ENCODE measurements at regions of chr14 and their contacts with region 1.

Region 1: DNA sequence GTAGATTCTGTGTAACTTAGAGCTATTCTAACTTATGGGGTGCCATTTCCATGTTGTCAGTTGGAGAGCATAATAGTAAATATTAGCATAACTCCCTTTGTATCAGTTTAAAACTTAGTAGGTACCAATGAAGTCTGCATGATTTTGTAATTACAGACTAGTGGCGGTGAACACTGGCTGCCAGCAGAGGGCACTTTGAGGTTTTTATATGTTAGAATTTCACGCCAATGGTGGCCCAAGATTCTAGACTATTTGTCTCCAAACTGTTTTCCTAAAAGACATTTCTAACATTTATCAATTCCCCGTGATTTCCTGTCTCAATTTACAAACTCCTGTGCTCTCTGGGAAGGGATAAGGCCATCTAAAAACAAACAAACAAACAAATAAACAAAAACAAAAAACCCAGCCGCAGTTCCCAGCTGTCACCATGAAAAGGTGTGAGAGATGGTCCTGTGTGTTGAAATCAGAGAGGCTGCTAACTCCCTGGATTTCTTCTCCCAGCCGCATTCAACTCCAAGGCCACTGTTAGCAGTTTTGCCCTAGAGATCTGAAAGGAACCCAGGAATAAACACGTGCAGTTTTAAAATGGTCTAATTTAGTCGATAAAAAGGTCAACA is 57.6 kb downstream of the BRMS1L start:
- DNase-seq: no peak
- ATAC-seq: peak; percentile 50; the same call in 1 of the 2 replicates
- H3K4me3 Mint-ChIP-seq: no peak overlapping the region
- H3K27ac Mint-ChIP-seq: no peak overlapping the region
- H3K4me1 Mint-ChIP-seq: peaks cover 4% of the 10 kb centered on the region; the same call in 1 of the 2 replicates
- H3K27me3 Mint-ChIP-seq: no peaks in the 10 kb centered on the region; the same call in 1 of the 2 replicates
- CTCF ChIP-seq: peak; percentile 37

Region 2: DNA sequence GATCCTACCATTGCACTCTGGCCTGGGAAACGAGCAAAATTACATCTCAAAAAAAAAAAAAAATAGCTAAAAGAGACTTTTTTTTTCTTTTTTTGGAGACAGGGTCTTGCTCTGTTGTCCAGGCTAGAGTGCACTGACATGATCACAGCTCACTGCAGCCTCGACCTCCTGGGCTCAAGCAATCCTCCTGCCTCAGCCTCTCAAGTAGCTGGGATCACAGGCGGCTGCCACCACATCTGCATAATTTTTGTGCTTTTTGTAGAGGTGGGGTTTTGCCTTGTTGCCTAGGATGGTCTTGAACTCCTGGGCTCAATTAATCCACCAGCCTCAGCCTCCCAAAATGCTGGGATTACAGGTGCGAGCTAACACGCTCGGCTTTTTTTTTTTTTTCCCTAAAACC is 86.0 kb before region 1 on chr14:
- CTCF ChIA-PET with region 1: no interaction called
- POLR2A ChIA-PET with region 1: no interaction called
- DNase-seq: no peak
- ATAC-seq: no peak
- H3K4me3 Mint-ChIP-seq: no peak overlapping the region
- H3K27ac Mint-ChIP-seq: no peak overlapping the region
- H3K4me1 Mint-ChIP-seq: no peaks in the 10 kb centered on the region
- H3K27me3 Mint-ChIP-seq: no peaks in the 10 kb centered on the region
- CTCF ChIP-seq: no peak

Region 3: GRCh38 chr14:35944847-35945246 is 61.1 kb after region 1 on chr14:
- CTCF ChIA-PET with region 1: interaction called, 19 read pairs
- POLR2A ChIA-PET with region 1: no interaction called
- DNase-seq: peak; percentile 65
- ATAC-seq: peak; percentile 99
- H3K4me3 Mint-ChIP-seq: no peak overlapping the region
- H3K27ac Mint-ChIP-seq: no peak overlapping the region
- H3K4me1 Mint-ChIP-seq: peaks cover under 1% of the 10 kb centered on the region; the same call in 1 of the 2 replicates
- H3K27me3 Mint-ChIP-seq: peaks cover 15% of the 10 kb centered on the region
- CTCF ChIP-seq: no peak; the same call in 1 of the 2 replicates

Region 4: DNA sequence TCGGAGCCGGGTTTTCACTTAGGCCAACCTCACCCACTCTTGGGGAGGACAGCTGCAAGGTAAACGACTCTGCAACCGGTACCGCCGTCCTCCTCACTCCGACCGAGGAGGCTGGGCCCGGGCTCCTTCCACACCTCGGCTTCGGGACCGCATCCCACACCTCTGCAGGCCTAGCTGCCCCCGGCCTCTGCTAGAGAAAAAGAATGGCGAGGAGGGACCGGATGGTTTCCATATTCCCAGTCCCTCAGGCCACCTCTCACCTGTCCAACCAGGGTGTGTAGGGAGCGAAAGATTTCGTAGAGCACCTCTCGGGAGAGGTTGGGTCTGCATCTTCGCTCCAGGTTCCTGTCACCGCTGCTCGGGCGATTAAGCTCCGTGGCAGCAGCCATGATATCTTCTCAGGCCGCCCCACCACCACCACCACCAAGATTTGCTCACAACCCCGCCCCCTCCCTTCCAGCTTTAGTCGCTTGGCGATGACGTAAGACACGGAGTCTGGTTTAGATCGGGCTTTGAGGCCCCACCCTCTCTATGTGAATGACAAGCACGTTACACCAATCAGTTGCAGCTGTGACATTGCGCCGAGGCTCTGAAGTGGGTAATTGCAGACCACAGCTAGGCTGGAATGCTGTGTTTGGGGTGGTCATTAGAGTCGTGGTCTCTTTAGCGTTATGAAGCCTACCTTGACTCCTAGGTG is 436.6 kb after region 1 on chr14 and contains the start of gene MBIP:
- CTCF ChIA-PET with region 1: no interaction called
- POLR2A ChIA-PET with region 1: no interaction called
- DNase-seq: peak; percentile 89
- ATAC-seq: peak; percentile 99
- H3K4me3 Mint-ChIP-seq: peak within 1 kb of the TSS; percentile 85
- H3K27ac Mint-ChIP-seq: peak within 1 kb of the TSS; percentile 97
- H3K4me1 Mint-ChIP-seq: peaks cover 26% of the 10 kb centered on the region
- H3K27me3 Mint-ChIP-seq: peaks cover 18% of the 10 kb centered on the region
- CTCF ChIP-seq: no peak
- total RNA-seq, gene MBIP: 18.1 to 19.5 TPM (median 18.4 TPM) in 3 replicates